Activated B cell treated with CpG ODN at 0.5 μM for 24 hours (primary cell): ENCODE measurements at regions of chr15 and their contacts with region 1.

Region 1: DNA sequence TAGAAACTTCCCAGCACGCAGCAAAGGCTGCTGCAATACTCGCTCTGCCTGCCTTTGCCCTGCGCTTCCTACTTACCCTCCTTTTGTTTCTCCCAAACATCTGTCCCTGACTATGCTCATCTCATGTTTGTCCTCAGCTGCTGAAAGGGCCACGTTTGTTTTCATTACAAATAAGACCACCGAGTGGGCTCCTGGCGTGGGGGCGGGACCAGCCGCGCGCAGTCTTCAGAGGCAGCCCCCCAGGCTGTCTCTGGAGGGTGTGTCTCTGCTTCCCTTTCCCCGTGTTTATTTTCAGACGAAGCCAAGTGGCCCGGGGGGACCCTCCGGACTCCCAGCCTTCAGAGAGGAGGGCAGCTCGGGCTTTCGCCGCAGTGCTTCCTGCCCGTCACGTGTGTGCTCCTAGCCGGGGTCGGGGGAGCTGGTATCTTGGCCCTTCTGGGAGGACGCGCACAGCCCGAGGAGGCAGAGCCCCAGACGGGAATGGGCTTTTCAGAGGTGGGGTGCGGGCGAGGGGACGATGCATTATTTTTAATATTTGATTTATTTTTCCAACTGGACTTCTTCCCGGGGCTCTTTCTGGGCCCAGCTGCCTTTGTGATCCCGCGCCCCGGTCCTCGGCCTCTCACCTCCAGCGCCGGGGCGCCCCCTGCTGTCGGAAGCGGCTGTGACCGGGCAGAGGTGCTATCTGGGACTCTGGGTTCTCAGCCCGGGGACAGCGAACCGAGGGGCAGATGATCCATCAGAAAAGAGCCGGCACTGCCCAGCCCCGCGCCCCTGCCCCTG is 70.0 kb upstream of the CGNL1 start:
- DNase-seq: peak; percentile 91
- ATAC-seq: peak; percentile 71
- H3K4me3 Mint-ChIP-seq: peak overlapping the region; percentile 90
- H3K27ac Mint-ChIP-seq: peak overlapping the region; percentile 88
- H3K4me1 Mint-ChIP-seq: peaks cover 76% of the 10 kb centered on the region
- H3K27me3 Mint-ChIP-seq: no peaks in the 10 kb centered on the region
- CTCF ChIP-seq: peak; percentile 45

Region 2: GRCh38 chr15:56180851-56181250 is 1125.5 kb before region 1 on chr15:
- CTCF ChIA-PET with region 1: no interaction called
- POLR2A ChIA-PET with region 1: no interaction called
- intact Hi-C with region 1: no loop called
- DNase-seq: no peak
- ATAC-seq: no peak
- H3K4me3 Mint-ChIP-seq: no peak overlapping the region
- H3K27ac Mint-ChIP-seq: no peak overlapping the region
- H3K4me1 Mint-ChIP-seq: peaks cover 19% of the 10 kb centered on the region
- H3K27me3 Mint-ChIP-seq: no peaks in the 10 kb centered on the region
- CTCF ChIP-seq: no peak

Region 3: GRCh38 chr15:56496635-56497034 is 809.7 kb before region 1 on chr15:
- CTCF ChIA-PET with region 1: interaction called, 10 read pairs
- POLR2A ChIA-PET with region 1: no interaction called
- intact Hi-C with region 1: loop called (anchors 1 kb)
- DNase-seq: no peak
- ATAC-seq: peak; percentile 81
- H3K4me3 Mint-ChIP-seq: peak overlapping the region; percentile 20
- H3K27ac Mint-ChIP-seq: no peak overlapping the region
- H3K4me1 Mint-ChIP-seq: peaks cover 4% of the 10 kb centered on the region
- H3K27me3 Mint-ChIP-seq: no peaks in the 10 kb centered on the region
- CTCF ChIP-seq: no peak

Region 4: GRCh38 chr15:57017024-57017423 is 289.3 kb before region 1 on chr15:
- CTCF ChIA-PET with region 1: interaction called, 4 read pairs
- POLR2A ChIA-PET with region 1: no interaction called
- intact Hi-C with region 1: loop called (anchors 2 kb)
- DNase-seq: no peak
- ATAC-seq: no peak
- H3K4me3 Mint-ChIP-seq: no peak overlapping the region
- H3K27ac Mint-ChIP-seq: no peak overlapping the region
- H3K4me1 Mint-ChIP-seq: peaks cover 18% of the 10 kb centered on the region
- H3K27me3 Mint-ChIP-seq: no peaks in the 10 kb centered on the region
- CTCF ChIP-seq: no peak

Region 5: DNA sequence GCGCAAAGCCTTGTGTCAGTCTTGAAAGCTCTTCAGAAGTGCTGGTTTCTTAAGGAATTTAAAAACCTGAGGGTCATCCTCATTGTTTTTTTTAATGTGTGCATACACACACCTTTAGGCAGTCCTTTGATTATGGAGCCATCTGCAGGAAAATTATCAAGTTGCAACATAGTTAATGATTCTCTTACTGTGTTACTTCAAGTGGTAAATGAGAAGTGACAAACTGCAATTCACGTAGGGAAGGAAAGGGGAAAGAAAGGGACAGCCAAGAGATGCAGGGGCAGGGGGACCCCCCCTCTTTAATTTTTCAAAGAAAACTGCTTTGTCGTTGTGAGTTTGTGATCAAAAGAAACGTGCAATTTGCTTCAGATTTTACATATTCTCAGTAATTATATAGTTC is 92.5 kb before region 1 on chr15:
- CTCF ChIA-PET with region 1: interaction called, 16 read pairs
- POLR2A ChIA-PET with region 1: interaction called, 8 read pairs
- intact Hi-C with region 1: loop called (anchors 2 kb)
- DNase-seq: no peak
- ATAC-seq: peak; percentile 65
- H3K4me3 Mint-ChIP-seq: no peak overlapping the region
- H3K27ac Mint-ChIP-seq: no peak overlapping the region
- H3K4me1 Mint-ChIP-seq: peaks cover 32% of the 10 kb centered on the region
- H3K27me3 Mint-ChIP-seq: no peaks in the 10 kb centered on the region
- CTCF ChIP-seq: no peak

Region 6: GRCh38 chr15:57281321-57281720 is 25.0 kb before region 1 on chr15:
- CTCF ChIA-PET with region 1: interaction called, 12 read pairs
- POLR2A ChIA-PET with region 1: interaction called, 387 read pairs
- intact Hi-C with region 1: no loop called
- DNase-seq: no peak
- ATAC-seq: peak; percentile 65
- H3K4me3 Mint-ChIP-seq: peak overlapping the region; percentile 83
- H3K27ac Mint-ChIP-seq: peak overlapping the region; percentile 98
- H3K4me1 Mint-ChIP-seq: peaks cover 79% of the 10 kb centered on the region
- H3K27me3 Mint-ChIP-seq: no peaks in the 10 kb centered on the region
- CTCF ChIP-seq: no peak

Region 7: DNA sequence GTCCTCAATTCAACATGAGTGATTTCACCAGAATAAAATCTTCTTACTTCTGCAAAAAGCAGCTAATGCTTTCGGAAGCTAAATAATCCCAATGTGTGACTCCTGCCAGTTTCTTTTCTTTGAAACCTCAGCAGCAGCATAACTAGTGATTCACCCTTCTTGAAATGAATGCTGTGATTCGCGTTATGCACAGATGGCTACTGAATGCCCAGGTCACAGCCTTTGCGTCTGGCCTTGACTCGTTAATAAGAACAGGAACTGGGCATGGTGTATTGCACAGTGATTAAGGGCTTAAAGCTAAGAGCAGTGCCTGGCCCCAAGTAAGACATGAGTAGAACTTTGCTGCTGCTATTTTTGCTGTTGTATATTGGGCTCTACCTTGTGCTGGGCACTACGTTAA is 88.9 kb after region 1 on chr15:
- CTCF ChIA-PET with region 1: no interaction called
- POLR2A ChIA-PET with region 1: no interaction called
- intact Hi-C with region 1: no loop called
- DNase-seq: no peak
- ATAC-seq: no peak
- H3K4me3 Mint-ChIP-seq: no peak overlapping the region
- H3K27ac Mint-ChIP-seq: no peak overlapping the region
- H3K4me1 Mint-ChIP-seq: no peaks in the 10 kb centered on the region
- H3K27me3 Mint-ChIP-seq: no peaks in the 10 kb centered on the region
- CTCF ChIP-seq: no peak

Region 8: DNA sequence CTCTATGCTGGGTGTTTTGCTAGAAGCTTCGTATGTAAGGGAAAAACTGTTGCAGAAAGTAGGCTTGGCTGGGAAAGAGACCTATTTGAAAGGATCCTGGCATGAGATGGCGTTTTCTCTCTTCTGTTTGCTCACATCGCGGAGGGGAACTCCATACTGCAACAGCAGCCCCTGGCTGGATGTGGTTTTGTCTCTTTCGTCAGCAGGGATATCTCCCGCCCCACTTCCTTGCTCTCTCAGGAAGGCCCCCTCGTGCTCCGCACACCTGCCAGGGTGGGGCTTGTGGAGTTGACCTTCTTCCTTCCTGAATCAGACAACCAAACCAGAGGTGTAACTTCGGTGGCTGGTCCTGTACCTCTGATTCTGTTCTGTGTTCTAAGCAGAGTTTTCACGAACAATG is 259.0 kb after region 1 on chr15:
- CTCF ChIA-PET with region 1: no interaction called
- POLR2A ChIA-PET with region 1: no interaction called
- intact Hi-C with region 1: no loop called
- DNase-seq: no peak
- ATAC-seq: peak; percentile 26
- H3K4me3 Mint-ChIP-seq: peak overlapping the region; percentile 70
- H3K27ac Mint-ChIP-seq: peak overlapping the region; percentile 27
- H3K4me1 Mint-ChIP-seq: peaks cover 51% of the 10 kb centered on the region
- H3K27me3 Mint-ChIP-seq: no peaks in the 10 kb centered on the region
- CTCF ChIP-seq: no peak